ENCODE measurements at regions of chr6 and their contacts with region 1.

Region 1: DNA sequence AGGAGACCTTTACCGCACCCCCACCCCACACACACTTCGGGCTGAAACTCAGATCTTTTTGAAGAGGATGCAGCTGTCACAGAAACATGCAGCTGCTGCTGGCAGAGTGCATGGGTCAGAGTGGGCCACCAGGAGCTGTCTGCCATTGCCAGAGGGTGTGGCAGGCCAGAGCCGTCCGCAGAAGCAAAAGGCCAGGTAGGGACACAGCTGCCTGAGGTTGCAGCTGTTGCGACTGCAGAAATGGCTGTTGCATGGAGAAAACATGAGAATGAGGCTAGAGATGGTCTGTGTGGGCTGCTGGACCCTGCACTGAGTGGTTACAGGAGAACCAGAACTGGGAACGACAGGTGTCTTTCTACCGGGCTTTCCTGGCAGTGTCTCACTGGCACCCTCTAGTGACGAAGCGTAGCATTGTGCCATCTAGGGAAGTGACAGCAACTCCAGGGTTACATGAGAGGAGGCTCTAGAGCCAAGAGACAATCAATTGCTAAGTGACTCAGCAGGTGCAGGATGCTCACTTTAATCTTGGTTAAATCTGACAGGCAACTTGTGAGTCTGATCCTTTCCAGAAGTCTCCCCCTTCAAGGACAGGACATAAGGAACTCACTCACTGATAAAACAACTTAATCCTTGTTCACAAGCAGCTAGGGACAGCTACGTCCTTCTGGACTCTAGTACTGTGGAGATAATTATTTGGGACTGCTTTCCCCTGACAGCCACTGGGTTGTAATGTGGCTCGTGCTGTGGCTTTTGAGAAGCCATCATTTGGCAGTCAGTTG is 29.1 kb upstream of the SERPINB9 start:
- DNase-seq: peak; percentile 96
- H3K4me3 Mint-ChIP-seq: peak overlapping the region; percentile 39
- H3K27ac Mint-ChIP-seq: peak overlapping the region; percentile 60
- H3K4me1 Mint-ChIP-seq: peaks cover 23% of the 10 kb centered on the region
- H3K27me3 Mint-ChIP-seq: no peaks in the 10 kb centered on the region

Region 2: DNA sequence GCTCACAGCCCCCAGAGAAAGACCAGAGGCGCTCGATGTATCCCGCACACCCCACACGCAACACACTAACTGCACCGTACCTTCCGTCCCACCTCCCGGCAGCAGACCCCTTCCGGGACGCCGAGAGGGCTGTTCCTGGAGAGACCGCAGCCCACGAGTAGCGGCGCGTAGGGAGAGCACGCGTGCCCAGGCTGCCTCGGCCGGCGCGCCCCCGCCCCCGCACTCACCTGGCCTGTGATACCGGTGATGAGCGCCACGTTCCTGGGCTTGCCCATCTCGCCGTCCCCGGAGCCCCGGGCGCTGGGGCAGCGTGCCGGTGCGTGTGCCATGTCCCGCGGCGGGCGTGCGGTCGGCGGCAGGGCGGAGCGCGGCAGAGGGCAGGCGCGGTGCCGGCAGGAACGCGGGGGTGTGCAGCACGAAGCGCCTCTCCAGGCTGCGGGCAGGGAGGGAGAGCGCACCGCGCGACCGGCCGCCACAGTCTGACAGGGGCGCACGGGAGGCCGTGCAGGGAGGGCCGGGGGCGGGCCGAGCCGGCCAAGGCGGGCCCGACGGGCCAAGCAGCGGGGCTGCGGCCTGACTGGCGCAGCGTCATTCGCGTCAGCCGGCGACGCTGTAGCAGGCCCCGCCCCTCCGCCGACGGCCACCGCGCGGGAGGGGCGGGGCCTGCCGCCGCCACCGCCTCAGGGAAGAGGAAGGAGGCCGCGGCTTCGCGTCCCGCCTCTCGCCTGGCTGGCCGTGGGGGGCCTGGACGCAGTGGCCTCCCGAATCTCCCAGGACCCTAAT is 686.9 kb before region 1 on chr6 and contains the start of gene GMDS:
- intact Hi-C with region 1: no loop called
- DNase-seq: peak; percentile 96
- H3K4me3 Mint-ChIP-seq: peak within 1 kb of the TSS; percentile 93
- H3K27ac Mint-ChIP-seq: peak within 1 kb of the TSS; percentile 95
- H3K4me1 Mint-ChIP-seq: peaks cover 54% of the 10 kb centered on the region
- H3K27me3 Mint-ChIP-seq: no peaks in the 10 kb centered on the region
- total RNA-seq, gene GMDS: 38.2 and 47.4 TPM in 2 replicates

Region 3: GRCh38 chr6:2841264-2842138 is 90.7 kb before region 1 on chr6 and contains the start of gene SERPINB1:
- intact Hi-C with region 1: loop called (anchors 1 kb)
- DNase-seq: peak; percentile 94
- H3K4me3 Mint-ChIP-seq: peak within 1 kb of the TSS; percentile 91
- H3K27ac Mint-ChIP-seq: peak within 1 kb of the TSS; percentile 88
- H3K4me1 Mint-ChIP-seq: peaks cover 57% of the 10 kb centered on the region
- H3K27me3 Mint-ChIP-seq: no peaks in the 10 kb centered on the region
- total RNA-seq, gene SERPINB1: 76.1 and 79.9 TPM in 2 replicates

Region 4: GRCh38 chr6:2853761-2854395 is 78.3 kb before region 1 on chr6:
- intact Hi-C with region 1: loop called (anchors 1 kb)
- DNase-seq: peak; percentile 87
- H3K4me3 Mint-ChIP-seq: peak overlapping the region; percentile 80
- H3K27ac Mint-ChIP-seq: peak overlapping the region; percentile 98
- H3K4me1 Mint-ChIP-seq: peaks cover 65% of the 10 kb centered on the region
- H3K27me3 Mint-ChIP-seq: no peaks in the 10 kb centered on the region

Region 5: DNA sequence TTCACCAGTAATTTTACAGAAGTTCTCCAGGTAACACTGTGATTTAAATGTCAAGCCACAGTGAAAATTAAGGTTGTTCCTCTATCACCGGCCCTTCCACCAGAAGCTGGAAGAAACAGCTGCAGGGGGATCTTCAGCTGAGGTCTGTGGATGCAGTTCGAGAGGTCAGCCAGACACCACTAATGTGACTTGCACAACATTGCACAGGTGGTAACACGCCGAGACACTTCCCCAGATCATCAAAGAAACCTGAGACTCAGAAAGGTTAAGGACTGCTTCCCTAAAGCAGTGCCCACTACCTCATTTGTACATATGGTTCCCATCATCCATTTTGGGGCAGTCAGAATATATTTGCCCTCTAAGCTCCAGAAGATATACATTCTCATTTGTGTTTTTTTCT is 21.0 kb before region 1 on chr6:
- intact Hi-C with region 1: loop called (anchors 2 kb)
- DNase-seq: peak; percentile 52
- H3K4me3 Mint-ChIP-seq: no peak overlapping the region
- H3K27ac Mint-ChIP-seq: no peak overlapping the region
- H3K4me1 Mint-ChIP-seq: peaks cover 35% of the 10 kb centered on the region
- H3K27me3 Mint-ChIP-seq: peaks cover 1% of the 10 kb centered on the region